ENCODE measurements at regions of chr20 and their contacts with region 1.

Region 1: DNA sequence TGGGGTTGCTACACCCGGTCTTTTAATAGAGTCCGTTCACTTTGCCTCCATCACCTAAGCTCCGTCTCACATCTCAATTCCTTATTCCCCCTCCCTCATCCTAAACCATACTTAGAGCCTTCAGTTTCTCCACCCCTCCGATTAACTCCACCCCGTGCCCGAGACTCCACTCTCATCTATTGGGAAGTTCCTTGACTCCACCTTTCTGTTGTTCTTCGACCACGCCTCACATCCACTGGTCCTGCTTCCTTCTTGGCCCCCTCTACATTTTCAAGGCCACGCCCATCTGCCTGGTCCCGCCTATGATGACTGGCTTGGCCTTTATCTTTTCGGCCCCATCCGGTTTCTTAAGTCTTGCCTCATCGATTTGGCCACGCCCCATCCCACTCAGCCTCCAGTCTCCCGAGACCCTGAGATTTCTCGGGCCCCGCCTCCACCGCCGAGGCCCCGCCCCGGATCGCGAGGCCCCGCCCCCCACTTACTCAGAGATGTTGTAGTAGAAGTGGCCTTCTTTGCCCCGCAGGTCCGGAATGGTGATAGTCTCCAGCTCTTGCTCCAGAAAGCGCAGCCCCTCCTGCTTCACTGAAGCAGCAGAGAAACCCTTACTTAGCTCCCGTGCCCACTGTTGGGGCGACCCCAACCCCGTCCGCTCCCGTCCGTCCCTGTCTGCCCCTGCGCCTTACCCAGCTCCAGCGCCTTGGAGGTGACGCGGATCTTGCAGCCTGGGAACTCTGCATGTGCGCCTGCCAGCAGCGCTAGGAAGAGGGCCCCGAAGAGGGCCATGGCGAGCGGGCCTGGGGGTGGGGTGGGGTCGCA is 1.1 kb downstream of the PLTP start:
- DNase-seq: peak; percentile 99
- H3K4me3 ChIP-seq: peak overlapping the region; percentile 52 to 81 (median 53)
- H3K4me3 Mint-ChIP-seq: peak overlapping the region; percentile 88 to 95
- H3K27ac ChIP-seq: peak overlapping the region; percentile 82 to 89
- H3K27ac Mint-ChIP-seq: peak overlapping the region; percentile 87 to 99 (median 95)
- H3K4me1 ChIP-seq: peaks cover 62 to 65% of the 10 kb centered on the region in 2 donors
- H3K4me1 Mint-ChIP-seq: peaks cover 48% of the 10 kb centered on the region
- H3K27me3 ChIP-seq: no peaks in the 10 kb centered on the region
- H3K27me3 Mint-ChIP-seq: peaks cover 2 to 3% (median 3%) of the 10 kb centered on the region in 3 donors
- CTCF ChIP-seq: no peak

Region 2: DNA sequence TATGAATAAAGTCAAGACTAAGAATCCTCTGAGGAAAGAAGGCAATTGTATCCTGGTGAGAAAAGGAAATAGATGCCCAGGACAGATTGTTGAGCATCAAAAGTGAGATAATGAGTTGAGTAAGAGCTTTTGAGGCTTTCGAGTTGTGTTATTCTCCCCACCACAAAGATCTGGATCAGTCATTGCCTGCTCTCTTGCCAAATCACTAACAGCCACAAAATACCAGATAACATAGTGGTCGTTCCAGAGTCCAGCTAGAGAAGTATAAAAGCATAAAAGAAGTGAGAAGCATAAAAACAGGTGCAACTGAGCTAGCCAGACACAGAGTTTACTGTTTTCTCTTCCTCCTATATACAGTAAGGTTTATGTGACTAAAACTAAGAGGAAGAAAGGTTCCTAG is 183.8 kb before region 1 on chr20:
- intact Hi-C with region 1: no loop called
- DNase-seq: no peak
- H3K4me3 ChIP-seq: no peak overlapping the region
- H3K4me3 Mint-ChIP-seq: no peak overlapping the region
- H3K27ac ChIP-seq: no peak overlapping the region
- H3K27ac Mint-ChIP-seq: no peak overlapping the region
- H3K4me1 ChIP-seq: no peaks in the 10 kb centered on the region
- H3K4me1 Mint-ChIP-seq: no peaks in the 10 kb centered on the region
- H3K27me3 ChIP-seq: no peaks in the 10 kb centered on the region
- H3K27me3 Mint-ChIP-seq: peaks cover 3 to 16% (median 5%) of the 10 kb centered on the region in 3 donors
- CTCF ChIP-seq: no peak

Region 3: DNA sequence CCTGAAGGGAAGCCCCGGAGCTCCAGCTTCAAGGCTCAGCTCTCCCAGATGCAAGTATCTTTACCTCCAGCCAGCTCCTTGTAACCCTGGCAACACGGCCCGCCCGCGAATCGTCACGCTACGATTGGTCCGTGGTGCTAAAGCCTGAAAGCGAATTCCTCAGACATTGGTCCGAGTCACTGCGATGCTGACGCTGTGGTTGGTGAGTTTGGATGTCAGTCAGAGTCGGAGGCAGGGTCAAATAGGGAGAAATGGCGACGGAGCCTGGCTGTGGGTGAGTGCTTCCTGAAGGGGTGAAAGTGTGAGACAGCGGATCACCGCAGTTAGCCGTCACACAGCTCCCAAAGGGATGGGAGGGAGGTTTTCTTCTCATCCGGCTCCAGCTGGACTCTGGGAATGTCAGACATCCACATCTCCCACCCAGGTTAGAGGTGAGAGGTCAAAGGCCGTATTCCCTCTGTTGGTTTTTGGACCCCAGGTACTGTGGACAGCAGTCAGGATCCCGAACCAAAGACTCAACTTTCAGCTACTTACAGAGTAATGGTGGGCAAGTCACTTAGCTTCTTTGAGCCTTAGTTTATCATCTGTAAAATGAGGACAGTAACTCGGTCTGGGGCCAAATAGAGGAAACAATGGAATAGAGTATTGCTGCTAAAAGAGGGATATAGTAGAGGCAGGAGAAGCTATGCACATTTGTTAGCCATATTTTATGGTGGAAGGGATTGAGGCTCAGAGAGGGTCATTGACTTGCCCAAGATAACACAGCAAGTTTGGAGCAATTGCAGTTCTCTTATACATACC is 29.7 kb before region 1 on chr20 and contains the start of gene ZSWIM1:
- intact Hi-C with region 1: loop called in 1 of 2 experiments (anchors 2 kb)
- DNase-seq: peak; percentile 98 to 99 (median 98)
- H3K4me3 ChIP-seq: peak within 1 kb of the TSS; percentile 71 to 81 (median 78)
- H3K4me3 Mint-ChIP-seq: peak within 1 kb of the TSS; percentile 85 to 95
- H3K27ac ChIP-seq: peak within 1 kb of the TSS; percentile 76 to 95
- H3K27ac Mint-ChIP-seq: peak within 1 kb of the TSS; percentile 96 to 98 (median 98)
- H3K4me1 ChIP-seq: peaks cover 28 to 39% of the 10 kb centered on the region in 2 donors
- H3K4me1 Mint-ChIP-seq: peaks cover 33% of the 10 kb centered on the region
- H3K27me3 ChIP-seq: no peaks in the 10 kb centered on the region
- H3K27me3 Mint-ChIP-seq: no peaks in the 10 kb centered on the region
- CTCF ChIP-seq: no peak
- polyA plus RNA-seq, gene ZSWIM1: 2.5 to 2.6 (median 2.5) TPM

Region 4: GRCh38 chr20:45890985-45891983 is 19.6 kb before region 1 on chr20 and contains the starts of genes CTSA and NEURL2:
- intact Hi-C with region 1: loop called in 1 of 2 experiments (anchors 2 kb)
- DNase-seq: peak; percentile 73 to 89 (median 82)
- H3K4me3 ChIP-seq: peak within 1 kb of the TSS; percentile 62 to 95 (median 72)
- H3K4me3 Mint-ChIP-seq: peak within 1 kb of the TSS; percentile 91 to 93
- H3K27ac ChIP-seq: peak within 1 kb of the TSS; percentile 59 to 87
- H3K27ac Mint-ChIP-seq: peak within 1 kb of the TSS; percentile 85 to 96 (median 91)
- H3K4me1 ChIP-seq: peaks cover 36 to 46% of the 10 kb centered on the region in 2 donors
- H3K4me1 Mint-ChIP-seq: peaks cover 33% of the 10 kb centered on the region
- H3K27me3 ChIP-seq: no peaks in the 10 kb centered on the region
- H3K27me3 Mint-ChIP-seq: no peaks in the 10 kb centered on the region
- CTCF ChIP-seq: no peak
- polyA plus RNA-seq, gene CTSA: 279 to 489 (median 366) TPM
- polyA plus RNA-seq, gene NEURL2: 0.14 to 1.1 TPM in 2 of 3 donors, not detected in the other

Region 5: GRCh38 chr20:45971675-45972499 is 61.0 kb after region 1 on chr20 and contains the start of gene ZNF335:
- intact Hi-C with region 1: loop called in 1 of 2 experiments (anchors 5 kb)
- DNase-seq: peak; percentile 86 to 98 (median 94)
- H3K4me3 ChIP-seq: peak within 1 kb of the TSS; percentile 90 to 96 (median 96)
- H3K4me3 Mint-ChIP-seq: peak within 1 kb of the TSS; percentile 83 to 88
- H3K27ac ChIP-seq: peak within 1 kb of the TSS; percentile 97 to 99
- H3K27ac Mint-ChIP-seq: peak within 1 kb of the TSS; percentile 90 to 100 (median 100)
- H3K4me1 ChIP-seq: peaks cover 45 to 47% of the 10 kb centered on the region in 2 donors
- H3K4me1 Mint-ChIP-seq: peaks cover 37% of the 10 kb centered on the region
- H3K27me3 ChIP-seq: no peaks in the 10 kb centered on the region
- H3K27me3 Mint-ChIP-seq: peaks cover 0 to 2% (median 0%) of the 10 kb centered on the region in 3 donors
- CTCF ChIP-seq: peak; percentile 22
- polyA plus RNA-seq, gene ZNF335: 2.7 to 39.6 (median 3.1) TPM

Region 6: GRCh38 chr20:46004889-46005473 is 94.1 kb after region 1 on chr20:
- intact Hi-C with region 1: loop called in 1 of 2 experiments (anchors 5 kb)
- DNase-seq: peak; percentile 89 to 97 (median 97)
- H3K4me3 ChIP-seq: peak overlapping the region; percentile 10 to 66 (median 25)
- H3K4me3 Mint-ChIP-seq: peak overlapping the region; percentile 64 to 82
- H3K27ac ChIP-seq: peak overlapping the region; percentile 86 to 91
- H3K27ac Mint-ChIP-seq: peak overlapping the region; percentile 91 to 99 (median 96)
- H3K4me1 ChIP-seq: peaks cover 91 to 95% of the 10 kb centered on the region in 2 donors
- H3K4me1 Mint-ChIP-seq: peaks cover 89% of the 10 kb centered on the region
- H3K27me3 ChIP-seq: peaks cover 17 to 35% of the 10 kb centered on the region in 2 donors
- H3K27me3 Mint-ChIP-seq: peaks cover 36 to 61% (median 52%) of the 10 kb centered on the region in 3 donors
- CTCF ChIP-seq: no peak

Region 7: GRCh38 chr20:46040902-46041535 is 130.1 kb after region 1 on chr20:
- intact Hi-C with region 1: no loop called
- DNase-seq: peak in 1 of 3 donors; percentile 10
- H3K4me3 ChIP-seq: no peak overlapping the region
- H3K4me3 Mint-ChIP-seq: peak overlapping the region in 1 of 2 donors; percentile 19
- H3K27ac ChIP-seq: no peak overlapping the region
- H3K27ac Mint-ChIP-seq: no peak overlapping the region
- H3K4me1 ChIP-seq: no peaks in the 10 kb centered on the region
- H3K4me1 Mint-ChIP-seq: no peaks in the 10 kb centered on the region
- H3K27me3 ChIP-seq: no peaks in the 10 kb centered on the region
- H3K27me3 Mint-ChIP-seq: peaks cover 12 to 19% (median 16%) of the 10 kb centered on the region in 3 donors
- CTCF ChIP-seq: no peak

Measured in CD14-positive monocyte (primary cell).